ENCODE measurements at regions of chr3 and their contacts with region 1.

Region 1: DNA sequence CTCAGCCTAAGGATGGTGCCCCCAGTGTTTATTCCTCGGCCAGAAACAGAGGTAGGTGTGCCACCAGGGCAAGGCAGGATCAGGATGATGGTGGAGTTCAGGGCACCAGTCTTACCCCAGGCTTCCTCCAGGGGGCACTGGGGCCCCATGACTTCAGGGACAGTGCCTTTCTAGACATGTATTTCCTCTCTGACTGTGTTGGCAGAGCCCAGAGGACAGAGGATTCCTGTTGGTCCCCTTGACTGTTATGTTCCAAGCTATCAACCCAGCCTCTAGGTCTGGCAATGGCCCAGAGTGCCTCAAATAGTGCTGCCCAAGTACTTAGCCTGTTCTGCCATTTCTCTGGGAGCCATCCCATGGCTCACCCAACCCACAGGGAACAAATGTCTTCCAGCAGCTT is 2.8 kb downstream of the HEMK1 start:
- DNase-seq: peak; percentile 77 to 91
- ATAC-seq: peak; percentile 29 to 53 (median 32)
- H3K4me3 ChIP-seq: no peak overlapping the region
- H3K4me3 Mint-ChIP-seq: peak overlapping the region; percentile 58
- H3K27ac ChIP-seq: peak overlapping the region; percentile 53
- H3K27ac Mint-ChIP-seq: peak overlapping the region; percentile 88 to 95
- H3K4me1 ChIP-seq: peaks cover 89% of the 10 kb centered on the region
- H3K4me1 Mint-ChIP-seq: peaks cover 52 to 81% of the 10 kb centered on the region in 2 donors
- H3K27me3 ChIP-seq: no peaks in the 10 kb centered on the region
- H3K27me3 Mint-ChIP-seq: no peaks in the 10 kb centered on the region
- CTCF ChIP-seq: peak; percentile 85

Region 2: DNA sequence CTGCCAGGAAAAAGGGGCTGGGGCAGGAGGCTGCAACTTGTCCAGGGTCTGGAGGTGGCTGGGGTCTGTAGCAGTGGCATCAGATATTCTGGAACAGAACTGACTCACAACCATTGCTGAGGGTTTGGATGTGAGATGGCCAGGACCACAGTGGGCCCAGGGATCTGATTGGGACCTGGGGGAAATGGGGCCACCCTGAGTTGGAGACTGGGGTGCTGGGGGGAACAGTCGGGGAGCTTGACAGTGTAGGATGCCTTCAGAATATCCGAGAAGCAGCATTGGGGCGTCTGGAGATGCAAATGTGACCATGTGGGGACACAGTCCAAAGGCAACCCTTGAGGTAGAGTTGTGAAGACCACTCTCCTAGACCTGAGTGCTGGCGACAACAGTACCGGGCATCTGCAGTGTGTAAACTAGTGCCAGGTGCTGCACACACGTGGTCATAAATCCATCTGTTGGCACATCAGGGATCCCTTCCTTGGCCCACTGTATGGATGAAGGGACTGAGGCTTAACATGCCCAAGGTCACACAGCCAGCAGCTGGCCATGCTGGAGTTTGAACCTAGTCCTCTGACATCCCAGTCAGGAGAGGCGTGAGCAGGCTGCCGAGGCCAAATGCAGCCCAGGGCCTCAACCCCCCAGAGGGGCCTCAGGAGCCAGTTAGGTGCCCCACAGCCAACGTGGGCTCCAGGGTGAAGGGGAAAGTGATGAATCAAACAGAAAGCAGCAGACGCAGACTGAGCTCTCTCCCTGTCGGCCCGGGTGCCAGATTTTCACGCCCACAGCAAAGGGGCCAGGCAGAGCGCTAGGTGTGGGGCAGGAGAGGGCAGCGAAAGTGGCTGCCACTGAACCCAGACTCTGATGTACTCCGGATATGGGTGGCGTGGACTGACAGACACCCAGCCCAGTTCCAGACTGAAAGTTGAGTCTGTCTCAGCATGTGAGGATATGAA is 15.9 kb after region 1 on chr3:
- intact Hi-C with region 1: loop called (anchors 2 kb)
- DNase-seq: peak; percentile 53 to 76
- ATAC-seq: peak; percentile 78 to 91 (median 88)
- H3K4me3 ChIP-seq: no peak overlapping the region
- H3K4me3 Mint-ChIP-seq: peak overlapping the region; percentile 63
- H3K27ac ChIP-seq: peak overlapping the region; percentile 12
- H3K27ac Mint-ChIP-seq: peak overlapping the region; percentile 68 to 83
- H3K4me1 ChIP-seq: peaks cover 56% of the 10 kb centered on the region
- H3K4me1 Mint-ChIP-seq: peaks cover 47 to 63% of the 10 kb centered on the region in 2 donors
- H3K27me3 ChIP-seq: no peaks in the 10 kb centered on the region
- H3K27me3 Mint-ChIP-seq: no peaks in the 10 kb centered on the region
- CTCF ChIP-seq: no peak

Region 3: DNA sequence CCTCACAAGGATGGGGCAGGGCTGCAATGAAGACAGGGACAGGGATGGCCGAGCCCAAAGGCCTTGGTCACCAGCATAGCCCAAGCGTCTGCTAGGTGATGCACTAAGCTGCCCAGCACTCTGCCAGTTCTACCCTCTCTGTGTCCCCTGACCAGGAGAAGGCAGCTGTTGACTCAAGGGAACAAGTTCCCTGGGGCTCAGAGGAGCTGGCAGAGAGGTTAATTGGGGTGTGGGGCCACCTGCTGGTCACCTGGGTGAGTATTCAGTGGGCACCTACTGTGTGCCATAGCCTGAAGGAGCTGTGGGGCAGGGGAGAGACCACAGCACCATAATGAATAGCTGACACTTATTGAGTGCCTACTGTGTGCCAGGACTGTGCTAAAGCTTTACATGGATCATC is 80.6 kb after region 1 on chr3:
- intact Hi-C with region 1: loop called (anchors 10 kb)
- DNase-seq: peak in 1 of 2 donors; percentile 70
- ATAC-seq: peak in 2 of 3 donors; percentile 70 to 76
- H3K4me3 ChIP-seq: no peak overlapping the region
- H3K4me3 Mint-ChIP-seq: no peak overlapping the region
- H3K27ac ChIP-seq: no peak overlapping the region
- H3K27ac Mint-ChIP-seq: no peak overlapping the region
- H3K4me1 ChIP-seq: no peaks in the 10 kb centered on the region
- H3K4me1 Mint-ChIP-seq: peaks cover 4 to 8% of the 10 kb centered on the region in 2 donors
- H3K27me3 ChIP-seq: no peaks in the 10 kb centered on the region
- H3K27me3 Mint-ChIP-seq: no peaks in the 10 kb centered on the region
- CTCF ChIP-seq: no peak

Region 4: GRCh38 chr3:50815867-50816266 is 243.7 kb after region 1 on chr3:
- intact Hi-C with region 1: no loop called
- DNase-seq: no peak
- ATAC-seq: no peak
- H3K4me3 ChIP-seq: no peak overlapping the region
- H3K4me3 Mint-ChIP-seq: no peak overlapping the region
- H3K27ac ChIP-seq: no peak overlapping the region
- H3K27ac Mint-ChIP-seq: no peak overlapping the region
- H3K4me1 ChIP-seq: no peaks in the 10 kb centered on the region
- H3K4me1 Mint-ChIP-seq: no peaks in the 10 kb centered on the region
- H3K27me3 ChIP-seq: no peaks in the 10 kb centered on the region
- H3K27me3 Mint-ChIP-seq: peaks cover 3 to 16% of the 10 kb centered on the region in 2 donors
- CTCF ChIP-seq: no peak

Region 5: DNA sequence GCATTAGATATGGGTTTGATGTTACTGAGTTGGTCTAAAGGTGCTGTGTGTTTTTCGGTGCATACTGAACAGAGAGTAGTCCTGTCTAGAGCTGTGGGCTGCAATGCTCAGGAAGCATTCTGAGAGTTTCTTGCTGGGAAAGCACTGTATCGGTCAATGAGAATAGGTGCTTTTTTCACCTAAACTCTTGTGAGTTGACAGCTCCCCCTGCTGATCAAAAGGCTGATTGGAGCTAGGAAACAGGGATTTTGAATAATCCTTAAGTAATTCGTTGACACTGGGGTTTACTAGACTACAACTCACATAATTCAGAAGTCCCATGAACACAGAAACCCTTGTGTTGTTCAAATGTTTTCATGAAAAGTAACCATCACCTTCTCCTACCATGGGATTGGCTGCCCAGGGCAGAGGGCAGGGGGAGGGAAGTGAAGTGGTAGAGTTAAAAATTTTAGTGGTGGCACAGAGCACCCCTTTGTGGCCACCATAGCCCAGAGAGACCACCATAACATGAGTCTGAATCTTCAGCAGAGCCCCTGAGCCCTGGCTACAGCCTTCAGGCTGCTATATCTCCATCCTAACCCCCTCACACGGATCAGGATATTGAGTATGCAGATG is 799.9 kb after region 1 on chr3:
- intact Hi-C with region 1: loop called (anchors 2 kb)
- DNase-seq: peak in 1 of 2 donors; percentile 78
- ATAC-seq: peak in 2 of 3 donors; percentile 66
- H3K4me3 ChIP-seq: no peak overlapping the region
- H3K4me3 Mint-ChIP-seq: no peak overlapping the region
- H3K27ac ChIP-seq: no peak overlapping the region
- H3K27ac Mint-ChIP-seq: no peak overlapping the region
- H3K4me1 ChIP-seq: no peaks in the 10 kb centered on the region
- H3K4me1 Mint-ChIP-seq: no peaks in the 10 kb centered on the region
- H3K27me3 ChIP-seq: no peaks in the 10 kb centered on the region
- H3K27me3 Mint-ChIP-seq: peaks cover 0 to 6% of the 10 kb centered on the region in 2 donors
- CTCF ChIP-seq: peak; percentile 67

Region 6: DNA sequence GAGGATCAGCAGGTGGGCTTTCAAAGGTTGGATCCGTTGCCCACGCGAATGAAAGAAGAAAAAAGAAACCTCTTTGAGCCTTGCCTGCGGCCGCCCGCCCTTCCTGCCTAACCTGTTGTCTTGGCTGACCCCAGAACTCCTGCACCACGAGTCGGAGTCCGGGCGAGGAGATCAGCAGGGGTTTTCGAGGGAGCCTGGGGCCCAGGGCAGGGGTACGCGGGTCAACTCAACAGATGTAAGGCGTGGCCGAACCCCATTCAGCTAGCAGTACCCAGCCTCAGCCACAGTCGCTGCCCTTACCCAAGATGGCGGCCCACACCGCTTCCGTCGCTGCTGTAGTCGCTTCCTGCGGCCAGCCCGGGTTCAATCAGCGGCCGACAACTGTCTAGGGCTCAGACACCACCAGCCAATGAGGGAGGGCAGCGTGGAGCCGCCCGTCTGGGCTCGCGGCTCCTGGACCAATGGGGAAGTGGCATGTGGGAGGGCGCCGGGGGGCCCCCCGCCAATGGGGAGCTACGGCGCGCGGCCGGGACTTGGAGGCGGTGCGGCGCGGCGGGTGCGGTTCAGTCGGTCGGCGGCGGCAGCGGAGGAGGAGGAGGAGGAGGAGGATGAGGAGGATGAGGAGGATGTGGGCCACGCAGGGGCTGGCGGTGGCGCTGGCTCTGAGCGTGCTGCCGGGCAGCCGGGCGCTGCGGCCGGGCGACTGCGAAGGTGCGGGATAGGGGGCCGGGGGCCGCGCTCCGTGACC is 812.7 kb after region 1 on chr3 and contains the start of gene MANF:
- intact Hi-C with region 1: loop called (anchors 2 kb)
- DNase-seq: peak; percentile 96 to 98
- ATAC-seq: peak; percentile 93 to 98 (median 94)
- H3K4me3 ChIP-seq: peak within 1 kb of the TSS; percentile 81
- H3K4me3 Mint-ChIP-seq: peak within 1 kb of the TSS; percentile 97
- H3K27ac ChIP-seq: peak within 1 kb of the TSS; percentile 85
- H3K27ac Mint-ChIP-seq: peak within 1 kb of the TSS; percentile 96 to 98
- H3K4me1 ChIP-seq: peaks cover 34% of the 10 kb centered on the region
- H3K4me1 Mint-ChIP-seq: peaks cover 45 to 46% of the 10 kb centered on the region in 2 donors
- H3K27me3 ChIP-seq: no peaks in the 10 kb centered on the region
- H3K27me3 Mint-ChIP-seq: no peaks in the 10 kb centered on the region
- CTCF ChIP-seq: peak; percentile 10
- total RNA-seq, gene MANF: 51.7 to 58.6 (median 58.3) TPM